IMR-90 (cell line): ENCODE measurements at regions of chr1 and their contacts with region 1.

Region 1: DNA sequence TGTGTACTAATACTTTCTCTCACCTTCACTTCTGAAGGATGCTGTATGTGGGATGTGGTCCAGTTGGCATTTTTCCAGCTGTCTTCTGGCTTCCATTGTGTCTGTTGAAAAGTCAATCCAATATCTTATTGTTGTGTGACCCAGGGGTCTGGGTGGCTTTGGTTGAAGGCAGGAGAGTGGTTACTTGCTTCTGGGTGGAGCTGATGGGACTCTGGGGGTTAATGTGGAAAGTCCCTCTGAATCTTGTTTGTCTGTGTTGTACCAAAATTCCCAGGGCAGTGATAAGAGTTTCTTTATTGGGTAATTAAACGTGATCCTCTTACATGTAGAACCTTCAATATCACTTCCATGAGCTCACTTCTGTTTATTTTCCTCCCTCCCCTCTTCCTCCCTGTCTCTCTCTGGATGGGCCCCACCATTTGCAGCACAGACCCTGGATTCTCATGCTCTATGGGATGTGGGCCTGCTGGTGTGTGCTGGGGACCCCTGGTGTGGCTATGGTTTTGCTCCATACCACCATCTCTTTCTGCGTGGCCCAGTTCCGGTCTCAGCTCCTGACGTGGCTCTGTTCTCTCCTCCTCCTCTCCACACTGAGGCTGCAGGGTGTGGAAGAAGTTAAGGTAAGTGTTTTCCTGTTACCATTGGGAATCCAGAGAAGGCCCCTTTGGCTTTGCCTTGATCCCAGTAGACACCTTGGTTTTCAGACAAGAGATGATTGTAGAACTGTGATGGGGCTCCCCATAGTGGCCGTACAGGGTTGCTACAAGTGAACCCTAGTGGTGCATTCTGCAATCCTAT is 71.5 kb downstream of the HHAT start:
- DNase-seq: peak; percentile 77
- ATAC-seq: peak; percentile 99
- H3K4me3 ChIP-seq: no peak overlapping the region
- H3K27ac ChIP-seq: no peak overlapping the region
- H3K4me1 ChIP-seq: peaks cover 4% of the 10 kb centered on the region
- H3K27me3 ChIP-seq: no peaks in the 10 kb centered on the region
- CTCF ChIP-seq: peak; percentile 95
- POLR2A ChIP-seq: peak; percentile 23; the same call in 1 of the 2 replicates
- RAD21 ChIP-seq: peak; percentile 90

Region 2: DNA sequence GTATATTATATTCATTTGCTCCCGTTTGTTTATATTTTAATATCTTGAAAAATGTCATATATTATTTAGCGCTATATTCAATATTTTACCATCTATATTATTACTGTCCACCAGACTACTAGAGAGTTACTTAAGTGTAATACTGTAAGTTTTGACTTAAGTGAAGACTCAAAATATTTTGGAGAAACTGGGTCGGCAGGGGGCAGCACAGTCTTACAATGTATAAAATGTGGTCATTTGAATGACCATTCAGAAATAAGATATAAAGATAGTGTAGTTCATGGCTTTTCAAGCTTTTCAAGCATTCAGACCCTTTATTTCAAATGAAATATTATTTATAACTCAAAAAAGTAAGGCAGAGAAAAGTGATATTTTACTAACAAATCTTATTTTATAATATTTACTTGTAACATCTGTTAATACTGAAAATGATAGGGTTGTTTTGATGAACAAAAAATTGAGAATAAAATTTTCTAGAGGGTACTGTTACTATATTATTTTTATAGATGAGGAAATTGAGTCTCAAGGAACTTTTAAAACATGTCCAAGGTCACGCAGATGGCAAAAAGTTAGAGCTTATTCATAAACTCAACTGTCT is 256.7 kb before region 1 on chr1:
- CTCF ChIA-PET with region 1: no interaction called
- POLR2A ChIA-PET with region 1: no interaction called
- dilution Hi-C with region 1: no loop called
- in situ Hi-C with region 1: no loop called
- intact Hi-C with region 1: loop called (anchors 1 kb)
- DNase-seq: peak; percentile 68
- ATAC-seq: no peak
- H3K4me3 ChIP-seq: no peak overlapping the region
- H3K27ac ChIP-seq: no peak overlapping the region
- H3K4me1 ChIP-seq: no peaks in the 10 kb centered on the region
- H3K27me3 ChIP-seq: no peaks in the 10 kb centered on the region
- CTCF ChIP-seq: peak; percentile 74
- POLR2A ChIP-seq: no peak
- RAD21 ChIP-seq: peak; percentile 81

Region 3: GRCh38 chr1:210311726-210312493 is 88.3 kb before region 1 on chr1:
- CTCF ChIA-PET with region 1: no interaction called
- POLR2A ChIA-PET with region 1: no interaction called
- dilution Hi-C with region 1: no loop called
- in situ Hi-C with region 1: no loop called
- intact Hi-C with region 1: loop called (anchors 2 kb)
- DNase-seq: no peak
- ATAC-seq: no peak
- H3K4me3 ChIP-seq: no peak overlapping the region
- H3K27ac ChIP-seq: no peak overlapping the region
- H3K4me1 ChIP-seq: 0 out of 2 replicates have a peak, but pooled peaks cover 2% of the 10 kb centered on the region
- H3K27me3 ChIP-seq: peaks cover 36% of the 10 kb centered on the region
- CTCF ChIP-seq: no peak
- POLR2A ChIP-seq: no peak
- RAD21 ChIP-seq: no peak

Region 4: GRCh38 chr1:210360852-210361477 is 39.3 kb before region 1 on chr1:
- CTCF ChIA-PET with region 1: interaction called, 16 read pairs
- POLR2A ChIA-PET with region 1: no interaction called
- dilution Hi-C with region 1: no loop called
- in situ Hi-C with region 1: loop called (anchors 5 kb)
- intact Hi-C with region 1: loop called (anchors 1 kb)
- DNase-seq: peak; percentile 74
- ATAC-seq: peak; percentile 91
- H3K4me3 ChIP-seq: no peak overlapping the region
- H3K27ac ChIP-seq: no peak overlapping the region
- H3K4me1 ChIP-seq: peaks cover 3% of the 10 kb centered on the region; the same call in 1 of the 2 replicates
- H3K27me3 ChIP-seq: no peaks in the 10 kb centered on the region; the same call in 1 of the 2 replicates
- CTCF ChIP-seq: peak; percentile 85
- POLR2A ChIP-seq: no peak
- RAD21 ChIP-seq: peak; percentile 80

Region 5: GRCh38 chr1:210373885-210374599 is 26.2 kb before region 1 on chr1:
- CTCF ChIA-PET with region 1: interaction called, 9 read pairs
- POLR2A ChIA-PET with region 1: no interaction called
- dilution Hi-C with region 1: no loop called
- in situ Hi-C with region 1: no loop called
- intact Hi-C with region 1: loop called (anchors 1 kb)
- DNase-seq: peak; percentile 97
- ATAC-seq: peak; percentile 71
- H3K4me3 ChIP-seq: no peak overlapping the region
- H3K27ac ChIP-seq: peak overlapping the region; percentile 24; the same call in 1 of the 2 replicates
- H3K4me1 ChIP-seq: peaks cover 18% of the 10 kb centered on the region
- H3K27me3 ChIP-seq: no peaks in the 10 kb centered on the region
- CTCF ChIP-seq: peak; percentile 85
- POLR2A ChIP-seq: peak; percentile 100
- RAD21 ChIP-seq: peak; percentile 76

Region 6: DNA sequence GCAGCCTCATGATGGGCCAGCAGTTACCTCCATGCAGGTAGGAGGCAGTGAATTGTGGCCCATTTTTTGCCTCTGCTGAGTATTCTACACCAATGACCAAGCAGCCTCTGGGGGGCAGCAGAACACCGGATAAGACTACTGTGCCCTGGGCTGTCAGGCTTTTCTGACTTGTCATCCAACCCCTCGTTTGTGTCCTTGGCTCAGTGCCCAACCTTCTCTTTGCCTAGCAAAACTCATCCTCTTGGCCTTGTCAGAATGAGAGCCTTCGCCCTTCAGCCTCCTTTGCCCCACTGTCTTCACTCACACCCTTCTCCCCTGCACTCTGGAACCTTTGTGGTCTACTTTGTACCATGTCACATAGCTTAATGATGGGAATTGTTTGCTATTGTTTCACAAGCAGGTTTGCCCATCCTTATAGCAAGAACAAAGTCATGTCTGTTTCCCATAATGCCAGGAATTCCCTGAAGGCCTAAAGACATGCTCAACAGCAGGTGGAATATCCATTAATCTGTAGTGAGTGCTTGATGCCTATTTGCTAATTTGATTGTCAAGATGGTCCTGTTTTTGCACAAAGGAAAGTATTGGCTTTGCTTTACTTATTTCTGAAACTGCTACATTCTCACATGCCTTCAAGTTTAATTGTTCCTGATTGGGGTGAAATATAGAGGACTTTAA is 184.3 kb after region 1 on chr1:
- CTCF ChIA-PET with region 1: interaction called, 3 read pairs
- POLR2A ChIA-PET with region 1: no interaction called
- dilution Hi-C with region 1: no loop called
- in situ Hi-C with region 1: loop called (anchors 25 kb)
- intact Hi-C with region 1: no loop called
- DNase-seq: peak; percentile 78
- ATAC-seq: peak; percentile 91
- H3K4me3 ChIP-seq: no peak overlapping the region
- H3K27ac ChIP-seq: no peak overlapping the region
- H3K4me1 ChIP-seq: peaks cover 3% of the 10 kb centered on the region; the same call in 1 of the 2 replicates
- H3K27me3 ChIP-seq: no peaks in the 10 kb centered on the region
- CTCF ChIP-seq: peak; percentile 92
- POLR2A ChIP-seq: no peak
- RAD21 ChIP-seq: peak; percentile 99

Region 7: GRCh38 chr1:210876275-210876674 is 476.0 kb after region 1 on chr1:
- CTCF ChIA-PET with region 1: no interaction called
- POLR2A ChIA-PET with region 1: no interaction called
- dilution Hi-C with region 1: loop called (anchors 10 kb)
- in situ Hi-C with region 1: no loop called
- intact Hi-C with region 1: no loop called
- DNase-seq: no peak
- ATAC-seq: no peak
- H3K4me3 ChIP-seq: no peak overlapping the region
- H3K27ac ChIP-seq: no peak overlapping the region
- H3K4me1 ChIP-seq: no peaks in the 10 kb centered on the region
- H3K27me3 ChIP-seq: no peaks in the 10 kb centered on the region
- CTCF ChIP-seq: no peak
- POLR2A ChIP-seq: no peak
- RAD21 ChIP-seq: no peak